Activated CD4-positive, alpha-beta T cell treated with anti-CD3 and anti-CD28 coated beads for 36 hours (primary cell): ENCODE measurements at regions of chr22 and their contacts with region 1.

Region 1: DNA sequence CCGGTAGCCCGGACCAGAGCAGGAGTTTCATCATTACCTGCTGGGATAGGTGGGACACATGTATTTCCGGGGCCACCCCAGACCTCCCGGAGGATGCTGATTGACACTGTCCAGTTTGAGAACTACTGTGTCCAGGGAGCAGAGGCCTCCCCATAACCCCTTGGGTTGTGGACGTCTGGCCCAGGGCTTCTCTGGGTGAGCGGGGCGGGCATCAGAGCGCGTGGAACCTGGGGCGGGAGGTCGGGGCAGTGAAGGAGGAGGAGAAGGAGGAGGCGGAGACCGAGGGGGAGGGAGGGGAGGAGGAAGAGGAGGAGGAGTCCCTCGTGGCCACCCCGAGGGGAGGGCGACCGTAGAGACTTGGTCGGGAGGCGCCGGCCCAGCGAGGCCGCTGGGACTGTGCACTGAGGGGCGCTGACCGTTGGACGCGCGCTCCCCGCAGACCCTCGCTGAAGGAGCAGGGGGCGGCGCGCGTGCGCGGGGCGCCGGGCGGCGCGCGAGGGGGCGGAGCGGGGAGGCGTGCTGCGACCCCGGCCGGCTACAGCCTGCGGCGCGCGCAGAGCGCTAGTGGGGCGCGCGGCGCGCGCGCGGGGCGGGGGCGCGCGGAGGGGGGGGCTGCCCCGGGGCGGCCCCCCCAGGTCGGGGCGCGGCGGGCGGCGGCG is at the start of gene GRK3:
- DNase-seq: peak; percentile 79
- ATAC-seq: peak; percentile 76
- H3K4me3 Mint-ChIP-seq: peak within 1 kb of the TSS; percentile 74
- H3K27ac Mint-ChIP-seq: peak within 1 kb of the TSS; percentile 73
- H3K4me1 Mint-ChIP-seq: peaks cover 33% of the 10 kb centered on the region
- H3K27me3 Mint-ChIP-seq: peaks cover 9% of the 10 kb centered on the region
- total RNA-seq, gene GRK3: 8.6 to 9.2 TPM

Region 2: GRCh38 chr22:25067851-25068421 is 496.5 kb before region 1 on chr22:
- CTCF ChIA-PET with region 1: no interaction called
- POLR2A ChIA-PET with region 1: no interaction called
- intact Hi-C with region 1: loop called in 1 of 2 experiments (anchors 10 kb)
- DNase-seq: peak; percentile 90
- ATAC-seq: peak; percentile 74
- H3K4me3 Mint-ChIP-seq: peak overlapping the region; percentile 78
- H3K27ac Mint-ChIP-seq: peak overlapping the region; percentile 93
- H3K4me1 Mint-ChIP-seq: peaks cover 88% of the 10 kb centered on the region
- H3K27me3 Mint-ChIP-seq: no peaks in the 10 kb centered on the region

Region 3: DNA sequence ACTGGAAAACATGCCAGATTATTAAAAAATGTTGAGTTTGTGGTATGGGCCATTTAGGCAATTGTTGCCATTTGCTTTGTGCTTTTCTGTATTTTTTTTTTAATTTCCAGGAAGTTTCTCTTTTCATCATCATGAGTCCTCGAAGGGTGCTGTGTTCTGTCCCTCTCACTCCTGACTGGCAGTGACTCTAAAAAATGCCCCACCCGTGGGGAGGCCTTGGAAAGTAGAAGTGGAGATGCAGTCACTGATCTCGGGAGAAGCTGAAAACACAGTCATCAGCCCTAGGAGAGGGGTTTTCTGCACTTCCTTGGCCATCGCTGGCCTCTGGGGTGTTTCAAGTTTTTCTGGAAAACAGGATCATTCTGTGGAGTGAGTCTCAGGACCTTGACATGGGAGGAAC is 98.5 kb before region 1 on chr22:
- CTCF ChIA-PET with region 1: no interaction called
- POLR2A ChIA-PET with region 1: no interaction called
- intact Hi-C with region 1: loop called in 1 of 2 experiments (anchors 5 kb)
- DNase-seq: no peak
- ATAC-seq: no peak
- H3K4me3 Mint-ChIP-seq: no peak overlapping the region
- H3K27ac Mint-ChIP-seq: no peak overlapping the region
- H3K4me1 Mint-ChIP-seq: no peaks in the 10 kb centered on the region
- H3K27me3 Mint-ChIP-seq: no peaks in the 10 kb centered on the region

Region 4: DNA sequence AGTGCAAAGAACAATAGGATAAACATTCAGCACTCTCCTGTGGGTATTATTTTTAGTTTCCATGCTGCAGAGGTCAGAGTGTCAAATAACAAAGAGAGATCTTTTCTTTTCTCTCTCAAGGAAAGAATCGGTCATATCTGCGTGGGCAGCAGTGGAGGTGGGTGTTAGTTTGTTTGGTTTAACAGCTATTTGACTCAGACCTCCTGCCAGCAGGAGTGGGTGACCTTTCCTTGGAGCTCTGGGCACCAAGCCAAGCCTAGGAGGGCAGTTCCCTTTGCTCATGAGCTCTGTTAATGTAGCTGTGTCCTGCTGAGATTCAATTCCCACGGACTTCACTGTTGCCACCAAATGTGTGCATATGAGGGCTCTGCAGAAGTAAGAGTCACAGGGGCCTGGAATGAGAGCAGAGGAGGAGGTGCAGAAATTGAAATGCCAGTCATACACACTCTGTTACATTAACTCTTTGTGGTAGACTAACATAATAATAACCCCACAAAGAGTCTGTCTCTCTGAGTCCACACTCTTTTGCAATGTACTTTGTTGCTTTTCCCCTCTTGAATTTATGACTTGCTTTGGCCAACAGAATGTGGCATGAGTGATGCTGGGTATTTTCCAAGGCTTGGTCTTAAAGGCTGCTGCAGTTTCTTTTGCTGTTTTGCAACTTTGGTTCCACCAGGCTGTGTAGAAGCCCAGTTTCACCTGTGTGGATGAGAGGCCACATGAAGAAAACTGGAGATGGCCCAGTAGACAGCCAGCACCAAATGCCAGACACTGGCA is 76.0 kb before region 1 on chr22:
- CTCF ChIA-PET with region 1: no interaction called
- POLR2A ChIA-PET with region 1: no interaction called
- intact Hi-C with region 1: loop called (anchors 5 to 10 kb)
- DNase-seq: peak; percentile 80
- ATAC-seq: peak; percentile 43
- H3K4me3 Mint-ChIP-seq: no peak overlapping the region
- H3K27ac Mint-ChIP-seq: no peak overlapping the region
- H3K4me1 Mint-ChIP-seq: peaks cover 47% of the 10 kb centered on the region
- H3K27me3 Mint-ChIP-seq: peaks cover 2% of the 10 kb centered on the region

Region 5: GRCh38 chr22:25623310-25623734 is 58.9 kb after region 1 on chr22:
- CTCF ChIA-PET with region 1: no interaction called
- POLR2A ChIA-PET with region 1: no interaction called
- intact Hi-C with region 1: loop called in 1 of 2 experiments (anchors 5 kb)
- DNase-seq: peak; percentile 41
- ATAC-seq: peak; percentile 93
- H3K4me3 Mint-ChIP-seq: no peak overlapping the region
- H3K27ac Mint-ChIP-seq: no peak overlapping the region
- H3K4me1 Mint-ChIP-seq: peaks cover 23% of the 10 kb centered on the region
- H3K27me3 Mint-ChIP-seq: peaks cover 2% of the 10 kb centered on the region

Region 6: GRCh38 chr22:25702040-25702439 is 137.6 kb after region 1 on chr22:
- CTCF ChIA-PET with region 1: no interaction called
- POLR2A ChIA-PET with region 1: no interaction called
- intact Hi-C with region 1: loop called in 1 of 2 experiments (anchors 10 kb)
- DNase-seq: no peak
- ATAC-seq: no peak
- H3K4me3 Mint-ChIP-seq: no peak overlapping the region
- H3K27ac Mint-ChIP-seq: no peak overlapping the region
- H3K4me1 Mint-ChIP-seq: peaks cover 13% of the 10 kb centered on the region
- H3K27me3 Mint-ChIP-seq: no peaks in the 10 kb centered on the region

Region 7: DNA sequence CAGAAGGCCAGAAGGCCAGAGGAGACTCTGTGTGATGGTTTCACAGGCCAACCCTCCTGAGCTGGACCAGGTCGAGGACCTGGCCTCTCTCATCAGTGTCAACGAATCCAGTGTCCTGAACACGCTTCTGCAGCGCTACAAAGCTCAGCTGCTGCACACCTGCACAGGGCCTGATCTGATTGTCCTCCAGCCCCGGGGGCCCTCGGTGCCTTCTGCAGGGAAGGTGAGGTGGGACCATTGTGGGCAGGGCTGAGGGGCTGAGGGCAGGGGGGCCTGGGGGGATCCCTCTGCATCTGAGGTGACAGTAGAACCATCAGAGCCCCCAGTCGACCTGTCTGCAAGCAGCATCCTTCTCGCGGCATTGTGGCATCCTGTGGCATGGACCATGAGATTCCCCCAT is 207.8 kb after region 1 on chr22:
- CTCF ChIA-PET with region 1: interaction called, 4 read pairs
- POLR2A ChIA-PET with region 1: no interaction called
- intact Hi-C with region 1: loop called in 1 of 2 experiments (anchors 2 kb)
- DNase-seq: no peak
- ATAC-seq: no peak
- H3K4me3 Mint-ChIP-seq: no peak overlapping the region
- H3K27ac Mint-ChIP-seq: no peak overlapping the region
- H3K4me1 Mint-ChIP-seq: peaks cover 12% of the 10 kb centered on the region
- H3K27me3 Mint-ChIP-seq: peaks cover 2% of the 10 kb centered on the region